PC-9 (cell line): ENCODE measurements at regions of chr9 and their contacts with region 1.

Region 1: DNA sequence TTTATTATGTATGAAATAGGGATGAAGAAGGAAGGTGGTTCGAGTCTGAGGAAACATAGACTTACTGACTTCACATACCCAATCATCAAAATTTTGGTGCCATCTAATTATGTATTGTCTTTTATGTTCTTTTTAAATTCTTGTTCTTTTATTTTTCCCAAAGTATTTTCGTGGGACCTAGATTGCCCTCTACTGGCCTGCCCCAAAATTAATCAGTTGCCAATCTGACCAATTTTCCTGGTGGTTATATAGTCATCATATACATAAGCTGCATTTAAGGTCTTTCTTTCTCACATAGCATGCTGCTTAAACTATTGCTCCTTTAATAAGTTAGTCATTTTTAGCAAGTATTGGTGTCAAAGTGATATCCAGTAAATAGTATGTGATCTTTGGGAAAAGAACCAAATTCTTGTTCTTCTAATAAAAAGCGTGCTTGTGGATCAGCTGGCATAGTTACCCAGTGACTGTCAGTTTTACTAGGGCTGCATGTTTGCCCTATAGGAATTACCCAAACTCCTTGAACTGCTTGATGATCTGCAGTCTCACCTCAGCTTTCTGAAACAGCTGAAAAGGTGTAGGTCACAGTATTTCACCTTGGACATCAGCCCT is 223.5 kb downstream of the SH3GL2 start:
- DNase-seq: no peak
- H3K4me3 ChIP-seq: no peak overlapping the region
- H3K27ac ChIP-seq: no peak overlapping the region
- H3K4me1 ChIP-seq: no peaks in the 10 kb centered on the region
- H3K27me3 ChIP-seq: no peaks in the 10 kb centered on the region
- CTCF ChIP-seq: peak; percentile 64

Region 2: DNA sequence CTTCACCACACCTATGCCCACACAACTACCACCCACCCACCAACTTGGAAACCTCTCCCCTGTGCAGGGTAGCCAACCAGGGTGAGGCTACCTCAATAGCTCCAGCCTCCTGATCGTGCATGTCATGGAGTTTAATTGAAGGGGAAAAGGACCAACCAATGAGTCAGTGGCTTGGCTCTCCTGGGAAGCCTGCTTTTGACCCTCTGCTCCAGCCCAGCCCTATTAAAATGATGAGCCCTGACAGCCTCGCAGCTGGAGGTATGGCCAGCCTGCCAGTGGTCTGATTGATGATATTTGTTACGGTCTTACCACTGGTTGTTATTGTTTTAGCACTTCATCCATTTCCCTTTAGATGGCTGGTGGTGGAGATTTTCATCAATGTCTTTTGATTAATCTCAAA is 56.9 kb after region 1 on chr9:
- CTCF ChIA-PET with region 1: no interaction called
- POLR2A ChIA-PET with region 1: interaction called, 18 read pairs
- intact Hi-C with region 1: no loop called
- DNase-seq: no peak
- H3K4me3 ChIP-seq: no peak overlapping the region
- H3K27ac ChIP-seq: no peak overlapping the region
- H3K4me1 ChIP-seq: no peaks in the 10 kb centered on the region
- H3K27me3 ChIP-seq: no peaks in the 10 kb centered on the region; the same call in 1 of the 2 replicates
- CTCF ChIP-seq: no peak